Thyroid gland (tissue), 4 donors: ENCODE measurements at regions of chr1 and their contacts with region 1.

Region 1: DNA sequence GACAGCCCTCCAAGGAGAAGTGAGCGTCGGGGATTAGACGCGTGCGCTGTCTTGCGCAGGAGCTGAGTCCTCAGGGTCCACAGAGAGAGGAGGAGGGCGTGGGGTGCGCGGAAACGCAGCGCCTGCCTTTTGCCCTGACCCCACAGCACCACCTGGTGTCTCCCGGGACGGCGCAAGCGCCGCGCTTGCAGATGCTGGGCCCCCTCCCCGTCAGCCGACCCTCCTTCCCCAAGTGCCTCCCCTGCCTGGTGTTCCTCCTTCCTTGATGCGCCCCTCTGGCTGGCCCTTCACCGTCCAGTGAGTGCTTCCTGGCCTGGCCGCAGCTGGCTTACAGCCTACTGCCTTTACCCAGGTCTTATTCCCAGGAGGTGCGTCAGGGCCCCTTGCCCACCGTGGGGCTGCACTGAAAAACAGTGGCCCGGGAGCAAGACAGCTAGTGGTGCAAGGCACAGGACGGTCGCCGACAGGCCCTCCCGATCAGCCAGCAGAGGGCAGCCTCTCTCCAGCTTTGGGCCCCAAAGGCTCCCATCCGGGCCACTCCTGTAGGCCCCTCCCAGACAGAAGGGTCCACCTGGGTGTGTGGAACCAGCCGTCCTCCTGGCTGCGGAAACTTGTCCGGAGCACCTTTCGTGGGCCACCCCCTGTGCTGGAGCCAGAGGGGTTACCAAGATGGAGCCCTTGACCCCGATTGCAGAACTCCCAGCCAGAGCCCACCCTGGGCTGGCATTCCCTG is 12.9 kb upstream of the PHLDA3 start:
- DNase-seq: peak; percentile 93 to 95
- H3K4me3 ChIP-seq: no peak overlapping the region
- H3K27ac ChIP-seq: peak overlapping the region; percentile 16 to 66 (median 64)
- H3K4me1 ChIP-seq: peaks cover 17 to 45% of the 10 kb centered on the region in 2 donors
- H3K27me3 ChIP-seq: no peaks in the 10 kb centered on the region
- CTCF ChIP-seq: peak; percentile 83 to 99 (median 94)
- POLR2A ChIP-seq: peak in 1 of 2 donors; percentile 35

Region 2: GRCh38 chr1:201447911-201448871 is 33.7 kb before region 1 on chr1:
- intact Hi-C with region 1: loop called (anchors 5 kb)
- DNase-seq: peak; percentile 76 to 79
- H3K4me3 ChIP-seq: no peak overlapping the region
- H3K27ac ChIP-seq: peak overlapping the region in 1 of 3 donors; percentile 8
- H3K4me1 ChIP-seq: peaks cover 5 to 23% of the 10 kb centered on the region in 2 donors
- H3K27me3 ChIP-seq: no peaks in the 10 kb centered on the region
- CTCF ChIP-seq: peak; percentile 65 to 90 (median 79)
- POLR2A ChIP-seq: no peak

Region 3: GRCh38 chr1:201511941-201512539 is 30.1 kb after region 1 on chr1:
- intact Hi-C with region 1: loop called (anchors 1 kb)
- DNase-seq: peak; percentile 87 to 89
- H3K4me3 ChIP-seq: no peak overlapping the region
- H3K27ac ChIP-seq: peak overlapping the region; percentile 82 to 97 (median 84)
- H3K4me1 ChIP-seq: peaks cover 30 to 41% of the 10 kb centered on the region in 2 donors
- H3K27me3 ChIP-seq: no peaks in the 10 kb centered on the region
- CTCF ChIP-seq: peak in 1 of 6 experiments; percentile 3
- POLR2A ChIP-seq: peak in 1 of 2 donors; percentile 81

Region 4: DNA sequence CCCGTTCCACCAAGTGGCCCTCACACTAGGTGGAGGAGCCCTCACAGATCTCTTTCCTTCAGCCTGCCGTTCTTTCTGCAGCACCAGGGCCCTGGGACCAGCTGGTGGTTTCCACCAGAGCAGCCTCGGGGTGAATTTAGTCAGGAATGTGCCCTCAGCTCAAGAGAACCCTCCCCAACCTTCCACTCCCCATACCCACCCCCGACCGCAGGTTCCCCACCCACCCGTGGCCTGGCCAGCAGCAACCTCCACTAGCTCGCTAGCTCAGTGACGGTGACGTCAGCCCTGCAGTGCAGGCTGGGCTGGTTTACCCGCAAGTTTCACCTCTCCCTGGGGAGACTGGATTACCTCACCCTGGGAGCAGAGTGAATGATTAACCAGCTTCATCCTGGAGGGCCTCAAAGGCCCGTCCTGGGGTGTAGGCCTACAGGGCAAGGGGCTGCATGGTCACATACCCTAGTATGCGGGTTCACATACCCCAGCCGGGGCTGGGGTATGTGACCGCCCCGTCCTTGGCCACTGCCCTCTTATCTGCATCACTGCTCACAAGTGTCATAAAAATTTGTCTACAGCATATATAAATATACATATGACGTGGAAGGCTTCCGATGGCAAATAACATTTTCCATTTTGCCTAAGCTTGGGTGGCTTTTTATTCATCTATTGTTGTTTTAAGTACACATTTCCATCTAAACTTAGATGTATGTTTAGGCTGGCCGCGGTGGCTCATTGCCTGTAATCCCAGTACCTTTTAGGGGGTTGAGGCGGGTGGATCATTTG is 552.9 kb after region 1 on chr1:
- intact Hi-C with region 1: no loop called
- DNase-seq: peak; percentile 86 to 87
- H3K4me3 ChIP-seq: no peak overlapping the region
- H3K27ac ChIP-seq: peak overlapping the region in 1 of 3 donors; percentile 41
- H3K4me1 ChIP-seq: peaks cover 10 to 11% of the 10 kb centered on the region in 2 donors
- H3K27me3 ChIP-seq: no peaks in the 10 kb centered on the region
- CTCF ChIP-seq: no peak
- POLR2A ChIP-seq: no peak